Activated CD4-positive, alpha-beta T cell treated with anti-CD3 and anti-CD28 coated beads for 36 hours (primary cell): ENCODE measurements at regions of chr6 and their contacts with region 1.

Region 1: GRCh38 chr6:137680705-137681346 is 186.2 kb upstream of the TNFAIP3 start:
- DNase-seq: no peak
- ATAC-seq: peak; percentile 62
- H3K4me3 Mint-ChIP-seq: peak overlapping the region; percentile 2
- H3K27ac Mint-ChIP-seq: peak overlapping the region; percentile 67
- H3K4me1 Mint-ChIP-seq: peaks cover 53% of the 10 kb centered on the region
- H3K27me3 Mint-ChIP-seq: peaks cover 12% of the 10 kb centered on the region

Region 2: GRCh38 chr6:137661601-137662000 is 19.2 kb before region 1 on chr6:
- CTCF ChIA-PET with region 1: interaction called, 4 read pairs
- POLR2A ChIA-PET with region 1: interaction called, 5 read pairs
- intact Hi-C with region 1: loop called (anchors 1 kb)
- DNase-seq: peak; percentile 64
- ATAC-seq: peak; percentile 37
- H3K4me3 Mint-ChIP-seq: no peak overlapping the region
- H3K27ac Mint-ChIP-seq: no peak overlapping the region
- H3K4me1 Mint-ChIP-seq: peaks cover 25% of the 10 kb centered on the region
- H3K27me3 Mint-ChIP-seq: peaks cover 9% of the 10 kb centered on the region